ENCODE measurements at regions of chr1 and their contacts with region 1.

Region 1: GRCh38 chr1:23916209-23917131 is 3.3 kb upstream of the CNR2 start:
- DNase-seq: peak; percentile 51 to 79 (median 69)
- H3K4me3 ChIP-seq: no peak overlapping the region
- H3K27ac ChIP-seq: no peak overlapping the region
- H3K4me1 ChIP-seq: peaks cover 0 to 7% of the 10 kb centered on the region in 2 donors
- H3K27me3 ChIP-seq: no peaks in the 10 kb centered on the region
- CTCF ChIP-seq: peak; percentile 33 to 66 (median 58)
- POLR2A ChIP-seq: no peak

Region 2: DNA sequence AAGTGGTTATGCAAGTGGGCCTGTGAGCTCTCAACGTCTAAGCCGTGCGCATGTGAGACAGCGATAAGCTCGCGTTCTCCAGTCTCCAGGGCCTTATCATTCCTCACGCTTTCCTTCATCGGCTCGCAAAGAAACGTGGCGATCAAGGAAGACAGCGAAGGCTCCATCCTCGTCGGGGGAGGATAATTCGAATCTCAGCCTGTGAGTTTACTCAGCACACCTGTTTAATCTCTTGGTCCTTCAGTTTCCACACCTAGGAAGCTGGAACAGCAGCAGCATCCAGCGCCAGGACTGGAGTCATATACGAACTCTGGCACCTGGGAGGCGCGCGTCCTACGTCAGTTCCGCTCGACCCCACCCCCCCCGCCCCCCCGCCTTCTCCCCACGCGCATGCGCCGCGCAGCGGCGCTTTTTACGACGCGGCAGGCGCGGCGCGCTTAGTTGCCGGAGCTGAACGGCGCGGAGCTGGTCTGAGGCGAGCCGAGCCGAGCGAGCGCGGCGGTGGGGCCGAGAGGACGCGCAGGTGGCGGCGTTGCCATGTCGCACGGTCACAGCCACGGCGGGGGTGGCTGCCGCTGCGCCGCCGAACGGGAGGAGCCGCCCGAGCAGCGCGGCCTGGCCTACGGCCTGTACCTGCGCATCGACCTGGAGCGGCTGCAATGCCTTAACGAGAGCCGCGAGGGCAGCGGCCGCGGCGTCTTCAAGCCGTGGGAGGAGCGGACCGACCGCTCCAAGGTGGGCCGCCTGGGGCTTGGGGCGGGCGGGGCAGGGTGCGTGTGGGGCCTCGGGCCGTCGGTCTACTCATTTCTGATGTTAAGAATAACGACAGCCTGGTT is 138.3 kb before region 1 on chr1 and contains the start of gene PITHD1:
- intact Hi-C with region 1: loop called in 1 of 2 experiments (anchors 10 kb)
- DNase-seq: peak; percentile 78 to 91 (median 85)
- H3K4me3 ChIP-seq: peak within 1 kb of the TSS; percentile 65 to 92 (median 74)
- H3K27ac ChIP-seq: peak within 1 kb of the TSS; percentile 36 to 95 (median 88)
- H3K4me1 ChIP-seq: peaks cover 6 to 26% of the 10 kb centered on the region in 2 donors
- H3K27me3 ChIP-seq: no peaks in the 10 kb centered on the region
- CTCF ChIP-seq: no peak
- POLR2A ChIP-seq: peak; percentile 38 to 90
- total RNA-seq, gene PITHD1: 54.9 to 98.0 (median 64.4) TPM

Region 3: DNA sequence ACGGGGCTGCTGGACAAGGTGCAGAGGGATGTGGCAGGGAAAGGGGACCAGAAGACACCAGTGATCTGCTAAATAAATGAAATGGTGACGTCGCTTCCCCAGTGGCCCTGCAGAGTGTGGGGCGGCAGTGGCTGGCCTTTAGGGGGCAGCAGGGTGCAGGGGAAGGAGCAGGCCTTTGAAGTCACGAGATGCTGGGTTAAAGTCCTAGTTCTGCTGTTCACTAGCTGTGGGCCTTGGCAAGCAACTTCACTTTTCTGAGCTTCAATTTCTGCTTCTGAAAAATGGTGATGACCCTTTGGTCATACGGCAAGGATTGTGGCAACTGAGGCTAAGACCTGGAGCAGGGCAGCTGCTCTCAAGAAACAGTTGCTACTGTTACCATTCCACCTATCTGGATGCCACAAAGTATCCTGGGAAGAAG is 106.7 kb before region 1 on chr1:
- intact Hi-C with region 1: loop called in 1 of 2 experiments (anchors 10 kb)
- DNase-seq: peak; percentile 68 to 83 (median 81)
- H3K4me3 ChIP-seq: no peak overlapping the region
- H3K27ac ChIP-seq: peak overlapping the region in 1 of 5 donors; percentile 62
- H3K4me1 ChIP-seq: peaks cover 0 to 4% of the 10 kb centered on the region in 2 donors
- H3K27me3 ChIP-seq: no peaks in the 10 kb centered on the region
- CTCF ChIP-seq: peak; percentile 53 to 77 (median 66)
- POLR2A ChIP-seq: no peak

Region 4: DNA sequence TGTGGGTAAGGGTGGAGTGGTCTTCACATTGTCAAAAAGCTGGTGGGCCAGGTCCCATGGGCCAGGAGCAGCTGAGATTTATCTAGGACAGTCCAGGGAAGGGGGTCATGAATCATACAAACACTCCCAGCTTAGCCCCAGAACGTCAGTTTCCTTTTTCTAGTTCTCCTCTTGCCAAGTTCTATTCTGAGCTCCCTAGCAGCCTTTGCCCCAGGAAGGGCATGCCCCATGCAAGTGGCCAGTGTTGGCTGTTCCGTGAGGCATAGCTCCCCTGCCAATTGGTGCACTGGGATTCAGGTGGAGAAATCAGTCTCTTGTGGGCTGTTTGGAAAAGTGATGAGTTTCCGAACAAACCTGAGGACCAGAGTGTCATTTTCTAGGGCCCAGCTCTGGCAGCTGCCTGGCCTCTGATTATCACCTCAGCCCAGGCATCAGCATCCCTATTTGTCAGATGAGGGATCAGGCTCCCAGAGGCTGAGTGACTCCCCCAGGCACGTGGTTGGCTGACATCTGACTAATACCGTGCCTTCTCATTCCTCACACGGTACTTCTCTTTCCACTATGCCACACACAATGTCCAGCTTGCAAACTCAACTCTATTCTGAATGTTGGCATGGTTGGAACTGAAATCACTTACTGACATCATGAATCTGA is 209.7 kb after region 1 on chr1:
- intact Hi-C with region 1: no loop called
- DNase-seq: no peak
- H3K4me3 ChIP-seq: no peak overlapping the region
- H3K27ac ChIP-seq: no peak overlapping the region
- H3K4me1 ChIP-seq: no peaks in the 10 kb centered on the region
- H3K27me3 ChIP-seq: no peaks in the 10 kb centered on the region
- CTCF ChIP-seq: no peak
- POLR2A ChIP-seq: no peak

Region 5: GRCh38 chr1:24199289-24199900 is 282.9 kb after region 1 on chr1:
- intact Hi-C with region 1: no loop called
- DNase-seq: peak; percentile 49 to 82 (median 65)
- H3K4me3 ChIP-seq: no peak overlapping the region
- H3K27ac ChIP-seq: no peak overlapping the region
- H3K4me1 ChIP-seq: no peaks in the 10 kb centered on the region
- H3K27me3 ChIP-seq: no peaks in the 10 kb centered on the region
- CTCF ChIP-seq: peak; percentile 75 to 94 (median 86)
- POLR2A ChIP-seq: no peak

Measured in adrenal gland (tissue), 19 donors.